ENCODE measurements at regions of chr5 and their contacts with region 1.

Region 1: GRCh38 chr5:99060306-99061261 is 131.8 kb upstream of the CHD1 start:
- DNase-seq: no peak
- H3K4me3 ChIP-seq: no peak overlapping the region
- CTCF ChIP-seq: peak; percentile 69

Region 2: DNA sequence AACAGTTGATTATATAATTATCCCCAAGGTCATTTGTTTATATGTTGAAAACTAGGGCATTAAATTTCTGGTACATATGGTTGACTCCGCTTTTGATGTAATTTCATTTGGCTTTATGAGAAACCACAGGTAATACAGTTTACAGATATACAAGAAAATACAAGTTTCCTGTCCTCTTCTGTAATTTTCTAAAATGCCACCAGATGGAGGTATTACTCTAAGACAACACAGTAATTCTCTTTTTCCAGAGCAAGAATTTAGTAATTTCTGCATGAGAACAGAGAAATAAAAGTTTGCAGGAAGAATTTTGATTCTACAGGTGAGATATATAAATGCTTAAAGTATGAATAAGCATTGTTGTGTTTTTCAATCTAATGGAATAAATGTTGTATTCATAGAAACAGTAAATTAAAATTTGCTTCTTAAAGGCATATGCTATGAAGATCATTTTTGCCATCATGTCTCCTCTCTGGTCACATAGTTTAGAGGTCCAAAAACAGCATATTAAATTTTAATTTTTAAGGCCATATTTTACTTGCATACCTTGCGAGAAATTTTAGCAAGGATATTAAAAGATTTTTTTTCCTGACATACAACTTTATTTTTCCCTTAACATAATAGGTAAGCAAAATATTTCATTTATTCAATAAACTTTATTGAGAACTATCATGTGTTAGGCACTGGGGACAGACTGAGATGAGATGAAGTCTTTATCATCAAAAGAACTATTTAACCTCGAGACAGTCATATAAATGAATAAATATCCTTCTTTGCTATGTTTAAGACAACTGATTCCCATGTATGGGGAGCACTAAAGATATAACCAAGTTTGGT is 154.5 kb before region 1 on chr5:
- CTCF ChIA-PET with region 1: interaction called, 70 read pairs
- POLR2A ChIA-PET with region 1: no interaction called
- DNase-seq: no peak
- H3K4me3 ChIP-seq: no peak overlapping the region
- CTCF ChIP-seq: peak; percentile 21

Region 3: DNA sequence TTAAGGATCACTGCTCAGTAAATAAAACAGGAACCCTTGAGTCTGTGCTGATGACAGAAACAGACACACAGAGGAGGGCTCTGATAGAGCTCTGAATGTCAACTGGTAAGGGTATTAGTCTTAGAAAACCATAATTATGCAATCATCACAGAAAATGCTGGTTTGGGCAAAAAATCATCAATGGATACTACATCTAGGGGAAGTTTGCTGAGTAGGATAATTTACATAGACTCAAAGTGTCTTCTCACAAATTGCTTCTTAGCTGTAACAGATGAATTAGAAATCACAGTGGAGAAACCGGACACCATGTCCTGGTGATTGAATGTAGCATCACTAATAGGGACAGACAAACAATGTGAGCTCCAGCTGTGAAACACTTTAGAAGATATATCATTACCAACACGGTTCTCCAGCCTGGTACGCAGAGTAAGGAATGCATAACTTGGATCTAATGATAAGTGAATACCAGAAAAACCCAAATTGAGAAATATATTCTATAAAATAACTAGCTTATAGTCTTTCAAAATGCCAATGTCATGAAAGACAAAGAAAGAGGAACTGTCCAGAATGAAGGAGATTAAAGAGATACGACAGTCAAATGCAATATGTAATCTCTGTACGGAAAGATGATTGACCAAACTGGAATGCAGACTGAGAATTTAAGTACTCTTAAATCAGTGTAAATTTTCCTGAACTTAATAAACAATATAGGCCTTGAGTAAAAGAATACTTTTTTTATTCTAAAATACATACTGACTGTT is 149.1 kb before region 1 on chr5:
- CTCF ChIA-PET with region 1: interaction called, 40 read pairs
- POLR2A ChIA-PET with region 1: no interaction called
- DNase-seq: no peak
- H3K4me3 ChIP-seq: no peak overlapping the region
- CTCF ChIP-seq: no peak

Region 4: GRCh38 chr5:99032234-99033013 is 28.2 kb before region 1 on chr5:
- CTCF ChIA-PET with region 1: interaction called, 33 read pairs
- POLR2A ChIA-PET with region 1: no interaction called
- DNase-seq: peak; percentile 45
- H3K4me3 ChIP-seq: no peak overlapping the region
- CTCF ChIP-seq: peak; percentile 60

Region 5: DNA sequence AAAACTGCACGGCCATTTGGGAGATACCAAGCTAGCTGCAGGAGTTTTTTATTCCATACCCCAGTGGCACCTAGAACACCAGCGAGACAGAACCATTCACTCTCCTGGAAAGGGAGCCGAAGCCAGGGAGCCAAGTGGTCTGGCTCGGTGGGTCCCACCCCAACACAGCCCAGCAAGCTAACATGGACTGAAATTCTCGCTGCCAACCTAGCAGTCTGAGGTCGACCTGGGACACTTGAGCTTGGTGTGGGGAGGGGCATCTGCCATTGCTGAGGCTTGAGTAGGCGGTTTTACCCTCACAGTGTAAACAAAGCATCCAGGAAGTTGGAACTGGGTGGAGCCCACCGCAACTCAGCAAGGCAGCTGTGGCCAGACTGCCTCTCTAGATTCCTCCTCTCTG is 22.9 kb before region 1 on chr5:
- CTCF ChIA-PET with region 1: interaction called, 33 read pairs
- POLR2A ChIA-PET with region 1: no interaction called
- DNase-seq: no peak
- H3K4me3 ChIP-seq: no peak overlapping the region
- CTCF ChIP-seq: no peak

Region 6: GRCh38 chr5:99045871-99046270 is 14.7 kb before region 1 on chr5:
- CTCF ChIA-PET with region 1: interaction called, 30 read pairs
- POLR2A ChIA-PET with region 1: no interaction called
- DNase-seq: no peak
- H3K4me3 ChIP-seq: no peak overlapping the region
- CTCF ChIP-seq: no peak

Region 7: DNA sequence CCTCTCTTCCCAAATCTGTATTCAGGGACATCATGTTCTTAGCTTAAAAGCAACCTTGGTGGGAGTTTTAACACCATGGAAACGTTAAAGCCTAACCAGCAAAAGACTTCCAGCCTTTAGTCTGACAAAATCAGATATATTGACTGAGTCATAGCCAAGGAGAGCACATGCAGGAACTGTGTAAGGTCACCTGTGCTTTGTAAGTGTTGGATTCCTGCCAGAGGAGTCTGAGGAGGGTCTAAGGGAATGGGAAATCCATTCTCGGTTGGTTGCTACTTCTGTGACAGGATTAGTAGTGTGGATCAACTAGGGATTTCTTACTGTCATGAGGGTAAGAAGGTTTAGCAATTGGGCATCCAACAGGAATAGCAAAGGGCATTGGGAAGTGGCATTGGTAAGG is 10.2 kb after region 1 on chr5:
- CTCF ChIA-PET with region 1: interaction called, 15 read pairs
- POLR2A ChIA-PET with region 1: no interaction called
- DNase-seq: no peak
- H3K4me3 ChIP-seq: no peak overlapping the region
- CTCF ChIP-seq: no peak

Measured in AG04449 (cell line).